ENCODE measurements at regions of chr5 and their contacts with region 1.

Region 1: DNA sequence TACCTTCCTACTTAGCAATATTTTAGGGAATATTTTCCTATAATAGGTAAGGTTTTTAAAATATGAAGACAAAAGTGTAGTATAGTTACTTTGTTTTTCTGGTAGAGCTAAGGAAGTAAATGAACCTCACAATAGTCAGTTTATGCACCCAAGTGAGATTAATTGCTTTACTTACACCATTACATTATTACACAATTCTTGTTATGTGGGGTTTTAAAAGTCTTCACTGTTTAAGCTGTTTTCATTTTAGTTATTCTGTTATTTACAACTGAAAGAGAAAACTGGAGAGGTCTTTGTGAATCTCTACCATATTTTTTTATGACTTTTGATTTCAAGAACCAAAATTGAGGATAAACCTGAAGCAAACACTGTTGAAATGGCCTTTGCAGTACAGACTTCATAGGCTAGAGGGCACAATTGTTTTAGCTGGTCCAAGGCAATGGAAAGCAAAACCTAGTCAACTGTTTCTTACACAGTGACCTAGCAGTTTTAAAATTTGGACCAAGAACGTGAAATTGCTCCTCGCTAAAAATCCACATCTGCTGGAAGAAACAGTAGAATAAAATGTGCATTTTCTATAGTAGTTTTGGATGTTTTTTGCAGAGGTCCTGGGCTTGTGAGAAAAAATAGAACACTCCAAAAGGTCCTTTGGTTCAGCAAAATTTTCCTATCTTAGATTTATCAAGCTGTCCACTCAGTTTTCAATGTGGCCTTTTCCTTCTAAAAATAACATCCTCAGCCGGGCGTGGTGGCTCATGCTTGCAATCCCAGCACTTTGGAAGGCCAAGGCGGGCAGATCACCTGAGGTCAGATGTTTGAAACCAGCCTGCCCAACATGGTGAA is 66.4 kb upstream of the FER start:
- DNase-seq: peak; percentile 48
- H3K4me3 Mint-ChIP-seq: no peak overlapping the region
- H3K27ac Mint-ChIP-seq: no peak overlapping the region
- H3K4me1 Mint-ChIP-seq: no peaks in the 10 kb centered on the region
- H3K27me3 Mint-ChIP-seq: no peaks in the 10 kb centered on the region

Region 2: DNA sequence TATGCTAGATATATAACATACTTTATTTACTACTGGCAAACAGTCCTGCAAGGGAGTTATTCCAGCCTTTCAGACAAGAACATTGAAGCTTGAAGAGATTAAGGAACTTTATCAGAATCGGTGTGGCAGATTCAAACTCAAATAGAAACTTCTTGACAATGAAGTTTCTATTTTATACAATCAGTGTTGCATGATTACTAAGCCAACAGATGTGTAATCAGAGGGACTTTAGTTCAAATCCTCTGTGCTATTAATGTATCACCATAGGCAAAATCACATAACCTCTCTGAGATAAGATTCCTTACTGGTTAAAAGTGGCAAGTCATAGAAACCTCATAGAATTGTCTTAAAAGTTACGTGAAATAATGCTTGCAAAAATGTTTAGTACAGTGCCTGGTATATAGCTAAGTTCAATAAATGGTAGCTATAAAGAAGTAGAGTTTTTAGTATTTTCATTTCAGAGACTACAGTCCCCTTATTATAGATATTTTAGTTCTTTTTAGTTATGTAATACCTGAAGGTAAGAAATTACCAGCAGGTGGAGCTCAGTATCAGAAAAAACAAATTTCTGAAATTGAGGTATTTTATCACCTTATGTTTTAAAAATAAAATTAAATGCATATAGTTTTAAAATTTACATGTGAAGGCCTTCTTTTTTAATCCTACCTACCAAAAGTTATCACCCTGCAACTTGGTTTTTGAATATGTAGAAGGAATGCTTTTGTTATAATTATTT is 238.5 kb after region 1 on chr5:
- CTCF ChIA-PET with region 1: interaction called, 4 read pairs
- intact Hi-C with region 1: loop called (anchors 5 kb)
- DNase-seq: no peak
- H3K4me3 Mint-ChIP-seq: no peak overlapping the region
- H3K27ac Mint-ChIP-seq: no peak overlapping the region
- H3K4me1 Mint-ChIP-seq: peaks cover 2% of the 10 kb centered on the region
- H3K27me3 Mint-ChIP-seq: no peaks in the 10 kb centered on the region